CD4-positive, alpha-beta memory T cell (primary cell): ENCODE measurements at regions of chr6 and their contacts with region 1.

Region 1: DNA sequence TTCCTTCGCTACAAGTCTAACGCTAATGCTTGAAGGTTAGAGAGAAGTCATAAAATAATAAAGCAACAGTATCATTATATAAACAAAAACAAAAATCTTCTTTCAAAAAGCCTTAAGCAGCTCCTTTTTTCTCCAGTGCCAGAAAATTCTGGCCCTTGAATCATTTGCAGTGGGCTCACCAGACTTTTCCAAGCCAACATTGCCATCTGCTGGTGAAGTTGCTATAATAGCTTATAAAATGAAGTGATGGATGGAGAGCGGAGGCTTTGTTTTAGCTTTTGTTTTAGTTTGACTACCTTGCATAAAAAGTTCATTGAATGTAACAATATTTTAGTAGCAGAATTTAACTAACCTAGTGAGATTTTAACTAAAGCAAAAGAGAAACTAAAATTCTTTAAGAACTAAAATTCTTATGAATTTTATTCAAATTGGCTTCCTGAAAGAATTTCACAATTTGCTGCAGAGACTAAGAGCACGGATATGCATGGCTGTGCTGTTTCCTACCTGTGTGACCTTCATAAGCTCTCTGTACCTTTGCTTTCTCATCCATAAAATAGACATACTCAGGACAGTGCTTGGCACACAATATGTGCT is 44.8 kb upstream of the SLC2A12 start:
- DNase-seq: peak; percentile 56 to 60 (median 57)
- H3K4me3 ChIP-seq: no peak overlapping the region
- H3K4me3 Mint-ChIP-seq: no peak overlapping the region
- H3K27ac ChIP-seq: no peak overlapping the region
- H3K27ac Mint-ChIP-seq: no peak overlapping the region
- H3K4me1 ChIP-seq: no peaks in the 10 kb centered on the region
- H3K4me1 Mint-ChIP-seq: no peaks in the 10 kb centered on the region
- H3K27me3 ChIP-seq: no peaks in the 10 kb centered on the region
- H3K27me3 Mint-ChIP-seq: peaks cover 17 to 18% of the 10 kb centered on the region in 2 donors

Region 2: GRCh38 chr6:132669690-132670291 is 1427.4 kb before region 1 on chr6:
- CTCF ChIA-PET with region 1: no interaction called
- POLR2A ChIA-PET with region 1: no interaction called
- intact Hi-C with region 1: loop called (anchors 5 kb)
- DNase-seq: peak in 4 of 5 donors; percentile 22 to 39 (median 36)
- H3K4me3 ChIP-seq: no peak overlapping the region
- H3K4me3 Mint-ChIP-seq: no peak overlapping the region
- H3K27ac ChIP-seq: no peak overlapping the region
- H3K27ac Mint-ChIP-seq: no peak overlapping the region
- H3K4me1 ChIP-seq: peaks cover 4% of the 10 kb centered on the region
- H3K4me1 Mint-ChIP-seq: peaks cover 0 to 4% (median 3%) of the 10 kb centered on the region in 4 donors
- H3K27me3 ChIP-seq: no peaks in the 10 kb centered on the region
- H3K27me3 Mint-ChIP-seq: peaks cover 2 to 6% of the 10 kb centered on the region in 2 donors

Region 3: DNA sequence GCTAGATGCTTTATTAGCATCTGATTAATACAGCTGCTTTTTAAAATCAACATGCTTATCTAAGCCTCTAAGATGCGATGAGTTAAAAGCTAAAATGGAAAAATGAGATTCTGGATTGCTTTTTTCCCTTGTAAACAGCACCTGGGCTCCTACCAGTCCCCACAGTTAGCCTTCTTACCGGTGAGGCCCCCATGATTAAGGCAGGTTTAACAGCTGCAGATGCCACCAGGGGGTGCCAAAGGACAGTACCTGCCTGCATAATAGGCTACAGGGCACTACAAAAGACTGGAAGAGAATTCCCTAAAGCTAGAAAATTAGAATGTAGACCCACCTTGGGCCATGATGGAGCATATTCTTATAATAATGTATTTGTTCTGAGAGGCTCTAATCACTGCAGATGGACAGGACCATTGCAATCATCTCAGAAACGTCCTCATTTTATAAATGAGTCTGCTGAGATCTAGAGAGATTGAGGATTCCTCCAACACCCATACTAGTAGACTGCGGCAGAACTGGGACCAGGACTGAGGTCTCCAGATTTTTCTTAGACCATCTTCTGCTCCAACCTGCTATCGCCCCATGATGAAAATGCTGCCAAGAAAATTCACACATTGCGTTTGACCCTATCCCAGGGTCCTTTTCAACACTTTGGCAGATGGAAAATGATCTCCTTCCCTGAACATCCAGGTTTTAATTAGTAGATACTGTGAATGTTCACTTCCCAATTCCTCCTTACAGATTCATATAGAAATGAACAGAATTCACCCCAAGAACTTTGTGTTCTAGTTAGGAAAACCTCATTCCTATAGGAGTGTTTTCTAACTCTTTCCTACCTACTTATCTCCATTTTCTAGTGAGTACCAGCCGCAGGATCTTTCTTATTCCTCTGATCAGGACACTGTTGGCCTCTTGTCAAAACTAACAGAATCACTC is 1134.0 kb before region 1 on chr6:
- CTCF ChIA-PET with region 1: interaction called, 5 read pairs
- POLR2A ChIA-PET with region 1: no interaction called
- intact Hi-C with region 1: loop called (anchors 5 kb)
- DNase-seq: peak in 4 of 5 donors; percentile 17 to 32 (median 18)
- H3K4me3 ChIP-seq: no peak overlapping the region
- H3K4me3 Mint-ChIP-seq: no peak overlapping the region
- H3K27ac ChIP-seq: no peak overlapping the region
- H3K27ac Mint-ChIP-seq: no peak overlapping the region
- H3K4me1 ChIP-seq: no peaks in the 10 kb centered on the region
- H3K4me1 Mint-ChIP-seq: no peaks in the 10 kb centered on the region
- H3K27me3 ChIP-seq: no peaks in the 10 kb centered on the region
- H3K27me3 Mint-ChIP-seq: peaks cover 6 to 13% of the 10 kb centered on the region in 2 donors

Region 4: DNA sequence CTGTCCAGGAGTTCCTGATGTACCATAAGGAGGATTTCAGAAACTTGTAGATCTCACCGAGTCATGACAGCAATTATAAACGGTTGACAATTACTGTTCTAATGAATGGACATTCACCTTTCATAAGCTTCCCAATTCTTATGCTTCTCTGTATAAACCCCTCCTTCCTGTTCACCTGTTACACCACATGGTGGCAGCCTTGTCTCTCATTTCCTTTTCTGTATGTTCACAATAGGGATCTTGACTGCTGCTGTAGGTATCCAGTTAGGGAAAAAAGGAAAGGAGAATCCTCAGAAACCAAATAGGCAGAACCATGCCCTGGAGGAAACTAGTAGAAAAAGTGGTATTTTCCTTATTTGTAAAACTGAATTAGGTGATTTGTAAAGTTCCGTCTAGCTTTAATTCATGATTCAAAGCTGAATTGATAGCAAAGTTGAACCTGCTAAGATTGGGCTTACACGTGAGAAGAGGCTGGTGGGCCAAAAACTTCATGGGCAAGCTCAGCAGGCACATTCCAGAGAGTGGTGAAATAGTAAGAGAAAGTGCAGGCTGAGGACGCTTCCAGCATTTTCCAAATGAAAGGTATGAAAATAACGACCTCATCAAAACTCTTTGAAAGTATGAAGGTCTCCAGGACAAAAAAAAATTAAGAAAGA is 173.1 kb before region 1 on chr6:
- CTCF ChIA-PET with region 1: interaction called, 281 read pairs
- POLR2A ChIA-PET with region 1: interaction called, 4 read pairs
- intact Hi-C with region 1: loop called (anchors 1 kb)
- DNase-seq: peak; percentile 56 to 62 (median 57)
- H3K4me3 ChIP-seq: no peak overlapping the region
- H3K4me3 Mint-ChIP-seq: no peak overlapping the region
- H3K27ac ChIP-seq: no peak overlapping the region
- H3K27ac Mint-ChIP-seq: no peak overlapping the region
- H3K4me1 ChIP-seq: no peaks in the 10 kb centered on the region
- H3K4me1 Mint-ChIP-seq: no peaks in the 10 kb centered on the region
- H3K27me3 ChIP-seq: no peaks in the 10 kb centered on the region
- H3K27me3 Mint-ChIP-seq: peaks cover 15 to 21% of the 10 kb centered on the region in 2 donors

Region 5: GRCh38 chr6:134080171-134080795 is 16.9 kb before region 1 on chr6:
- CTCF ChIA-PET with region 1: interaction called, 27 read pairs
- POLR2A ChIA-PET with region 1: no interaction called
- intact Hi-C with region 1: no loop called
- DNase-seq: peak in 1 of 5 donors; percentile 11
- H3K4me3 ChIP-seq: no peak overlapping the region
- H3K4me3 Mint-ChIP-seq: peak overlapping the region in 5 of 8 donors; percentile 24 to 46 (median 27)
- H3K27ac ChIP-seq: no peak overlapping the region
- H3K27ac Mint-ChIP-seq: peak overlapping the region in 2 of 7 donors; percentile 9 to 17
- H3K4me1 ChIP-seq: peaks cover 9% of the 10 kb centered on the region
- H3K4me1 Mint-ChIP-seq: peaks cover 13 to 20% (median 17%) of the 10 kb centered on the region in 4 donors
- H3K27me3 ChIP-seq: no peaks in the 10 kb centered on the region
- H3K27me3 Mint-ChIP-seq: no peaks in the 10 kb centered on the region